Endothelial cell of umbilical vein (primary cell): ENCODE measurements at regions of chr1 and their contacts with region 1.

Region 1: GRCh38 chr1:175514387-175514953 is 228.9 kb downstream of the TNR start:
- DNase-seq: peak; percentile 94
- H3K4me3 ChIP-seq: peak overlapping the region in 1 of 3 experiments; percentile 25
- H3K27ac ChIP-seq: peak overlapping the region; percentile 99
- H3K4me1 ChIP-seq: peaks cover 61% of the 10 kb centered on the region
- H3K27me3 ChIP-seq: no peaks in the 10 kb centered on the region
- CTCF ChIP-seq: no peak
- POLR2A ChIP-seq: peak; percentile 22

Region 2: GRCh38 chr1:175169305-175170018 is 345.0 kb before region 1 on chr1:
- CTCF ChIA-PET with region 1: no interaction called
- POLR2A ChIA-PET with region 1: no interaction called
- dilution Hi-C with region 1: no loop called
- intact Hi-C with region 1: loop called (anchors 1 kb)
- DNase-seq: peak; percentile 94
- H3K4me3 ChIP-seq: peak overlapping the region in 1 of 3 experiments; percentile 40
- H3K27ac ChIP-seq: peak overlapping the region; percentile 99
- H3K4me1 ChIP-seq: peaks cover 32% of the 10 kb centered on the region
- H3K27me3 ChIP-seq: no peaks in the 10 kb centered on the region
- CTCF ChIP-seq: no peak
- POLR2A ChIP-seq: peak; percentile 56

Region 3: DNA sequence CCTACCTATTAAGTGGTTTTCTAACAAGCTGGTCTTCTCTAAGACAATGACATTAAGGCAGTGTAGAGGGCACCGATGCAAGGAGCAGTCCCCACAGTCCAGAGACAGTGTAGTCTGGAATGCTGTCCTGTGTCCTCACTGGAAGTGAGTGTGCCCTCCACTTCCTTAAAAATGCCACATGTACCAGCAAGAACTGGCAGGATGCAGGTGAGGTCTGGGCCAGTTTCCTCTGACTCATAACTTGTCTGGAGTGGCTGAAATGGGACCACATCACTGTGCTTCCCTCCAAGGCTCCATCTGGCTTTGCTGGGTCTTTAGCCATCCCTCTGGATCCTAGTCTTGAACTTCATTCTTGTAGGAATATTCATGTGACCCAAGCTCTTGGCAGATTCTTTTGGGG is 151.4 kb before region 1 on chr1:
- CTCF ChIA-PET with region 1: no interaction called
- POLR2A ChIA-PET with region 1: no interaction called
- dilution Hi-C with region 1: no loop called
- intact Hi-C with region 1: loop called (anchors 1 kb)
- DNase-seq: peak; percentile 43
- H3K4me3 ChIP-seq: no peak overlapping the region
- H3K27ac ChIP-seq: peak overlapping the region; percentile 9
- H3K4me1 ChIP-seq: peaks cover 14% of the 10 kb centered on the region
- H3K27me3 ChIP-seq: peaks cover 3 to 16% of the 10 kb centered on the region in 2 experiments
- CTCF ChIP-seq: no peak
- POLR2A ChIP-seq: no peak

Region 4: DNA sequence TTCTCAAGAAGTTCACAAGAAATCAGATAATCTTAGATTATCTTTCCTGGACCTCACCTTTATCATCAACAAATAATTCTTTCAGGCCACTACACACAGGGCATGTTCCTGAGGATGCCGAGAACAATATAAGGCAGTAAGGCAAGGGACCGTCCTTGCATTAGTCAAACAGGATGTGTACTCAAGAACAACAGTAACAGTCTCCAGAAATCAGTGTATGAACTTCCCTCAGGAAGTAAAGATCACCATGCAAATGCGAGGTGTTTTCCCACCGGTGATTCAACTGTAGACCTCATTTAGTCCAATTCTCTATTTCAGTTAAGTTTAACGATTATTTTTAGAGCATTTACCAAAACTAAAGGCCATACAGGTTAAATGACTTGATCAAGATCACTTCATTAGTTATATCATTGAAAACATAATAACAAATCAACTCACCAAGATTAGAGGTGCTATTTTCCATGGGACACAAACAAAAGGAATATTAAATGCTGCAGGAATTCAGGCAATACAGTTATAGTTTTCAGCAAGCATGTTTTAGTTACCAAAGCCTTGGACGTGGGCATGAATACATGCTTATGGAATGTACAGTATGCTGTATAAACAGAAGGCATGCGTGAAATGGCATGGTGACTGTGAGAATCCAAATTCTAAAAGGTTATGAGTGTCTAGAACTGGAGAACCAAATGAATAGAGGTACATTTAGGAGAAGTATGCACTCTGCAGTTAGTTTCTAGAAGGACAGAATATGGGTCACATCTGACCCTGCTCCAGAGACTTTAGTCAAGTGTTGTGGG is 83.7 kb after region 1 on chr1:
- CTCF ChIA-PET with region 1: no interaction called
- POLR2A ChIA-PET with region 1: interaction called, 4 read pairs
- dilution Hi-C with region 1: no loop called
- intact Hi-C with region 1: loop called (anchors 1 kb)
- DNase-seq: peak; percentile 83
- H3K4me3 ChIP-seq: no peak overlapping the region
- H3K27ac ChIP-seq: peak overlapping the region; percentile 96
- H3K4me1 ChIP-seq: peaks cover 27% of the 10 kb centered on the region
- H3K27me3 ChIP-seq: no peaks in the 10 kb centered on the region
- CTCF ChIP-seq: no peak
- POLR2A ChIP-seq: no peak

Region 5: GRCh38 chr1:175802407-175803131 is 288.1 kb after region 1 on chr1:
- CTCF ChIA-PET with region 1: no interaction called
- POLR2A ChIA-PET with region 1: no interaction called
- dilution Hi-C with region 1: no loop called
- intact Hi-C with region 1: no loop called
- DNase-seq: no peak
- H3K4me3 ChIP-seq: no peak overlapping the region
- H3K27ac ChIP-seq: no peak overlapping the region
- H3K4me1 ChIP-seq: no peaks in the 10 kb centered on the region
- H3K27me3 ChIP-seq: no peaks in the 10 kb centered on the region
- CTCF ChIP-seq: no peak
- POLR2A ChIP-seq: no peak

Region 6: GRCh38 chr1:176206961-176207902 is 692.8 kb after region 1 on chr1 and contains the start of gene COP1:
- CTCF ChIA-PET with region 1: no interaction called
- POLR2A ChIA-PET with region 1: no interaction called
- dilution Hi-C with region 1: no loop called
- intact Hi-C with region 1: loop called (anchors 10 kb)
- DNase-seq: peak; percentile 95
- H3K4me3 ChIP-seq: peak within 1 kb of the TSS; percentile 77 to 92 (median 87)
- H3K27ac ChIP-seq: peak within 1 kb of the TSS; percentile 80
- H3K4me1 ChIP-seq: peaks cover 15% of the 10 kb centered on the region
- H3K27me3 ChIP-seq: no peaks in the 10 kb centered on the region
- CTCF ChIP-seq: no peak
- POLR2A ChIP-seq: peak; percentile 86
- total RNA-seq, gene COP1: 40.8 and 40.9 TPM in 2 replicates